ENCODE measurements at regions of chr2 and their contacts with region 1.

Region 1: DNA sequence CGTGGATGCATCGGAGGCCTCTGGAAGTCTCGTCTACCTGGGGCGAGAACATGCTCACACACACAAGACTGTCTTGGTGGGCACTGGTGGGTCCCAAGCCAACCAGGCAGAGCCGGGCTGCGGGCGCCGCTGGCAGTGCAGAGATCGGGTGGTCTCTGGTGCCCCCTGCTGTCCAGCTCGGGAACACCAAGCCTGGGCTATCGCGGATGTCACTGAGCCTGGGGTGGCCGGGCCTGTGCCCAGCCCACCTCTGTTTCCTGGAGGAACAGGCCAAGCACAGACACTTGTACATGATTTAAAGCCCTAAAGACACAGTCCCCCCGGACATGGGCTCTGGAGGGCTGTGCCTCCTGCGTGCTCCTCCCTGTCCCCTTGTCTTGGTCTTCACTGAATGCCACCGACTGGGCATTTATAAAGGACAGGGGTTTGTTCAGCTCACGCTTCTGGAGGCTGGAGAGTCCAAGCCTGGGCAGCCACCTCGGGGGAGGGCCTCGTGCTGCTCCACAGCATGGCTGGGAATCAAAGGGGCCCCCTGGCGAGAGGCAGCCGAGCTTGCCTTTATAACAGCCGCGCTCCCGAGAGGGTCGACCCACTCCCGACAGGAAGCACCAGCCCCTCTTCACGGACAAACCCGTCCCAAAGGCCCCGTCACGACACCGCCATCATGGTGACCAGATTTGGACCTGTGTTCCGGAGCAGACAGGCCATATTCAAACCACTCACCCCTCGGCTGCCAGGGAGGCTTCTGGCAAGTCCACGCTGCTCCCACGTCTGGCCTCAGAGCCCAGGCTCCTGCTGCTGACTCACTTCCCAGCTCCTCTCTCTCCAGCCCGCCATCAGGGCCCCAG is 3.6 kb upstream of the OTOS start:
- ATAC-seq: peak; percentile 77 to 98 (median 88)
- H3K4me3 ChIP-seq: no peak overlapping the region
- H3K27ac ChIP-seq: no peak overlapping the region
- H3K4me1 ChIP-seq: no peaks in the 10 kb centered on the region

Region 2: DNA sequence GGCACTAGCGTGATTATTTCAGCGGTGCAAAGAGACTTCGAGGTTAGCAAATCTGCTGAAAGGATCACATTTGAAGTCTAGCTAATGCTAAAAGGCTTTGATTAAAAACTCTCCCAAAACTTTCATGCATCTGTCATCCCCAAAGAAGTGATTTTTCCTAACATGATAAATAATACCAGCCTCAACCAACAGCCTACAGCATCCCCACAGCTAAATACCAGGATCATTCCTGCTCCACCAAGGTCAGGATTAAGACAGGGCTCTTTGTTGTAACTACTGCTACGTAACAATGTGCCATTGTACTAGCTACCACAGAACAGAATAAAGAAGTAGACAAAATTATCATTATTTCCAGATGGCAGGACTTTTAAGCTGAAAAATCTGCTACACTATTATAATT is 92.3 kb before region 1 on chr2:
- in situ Hi-C with region 1: loop called in 1 of 9 experiments (anchors 10 kb)
- ATAC-seq: peak in 1 of 8 experiments; percentile 48
- H3K4me3 ChIP-seq: no peak overlapping the region
- H3K27ac ChIP-seq: no peak overlapping the region
- H3K4me1 ChIP-seq: no peaks in the 10 kb centered on the region

Region 3: DNA sequence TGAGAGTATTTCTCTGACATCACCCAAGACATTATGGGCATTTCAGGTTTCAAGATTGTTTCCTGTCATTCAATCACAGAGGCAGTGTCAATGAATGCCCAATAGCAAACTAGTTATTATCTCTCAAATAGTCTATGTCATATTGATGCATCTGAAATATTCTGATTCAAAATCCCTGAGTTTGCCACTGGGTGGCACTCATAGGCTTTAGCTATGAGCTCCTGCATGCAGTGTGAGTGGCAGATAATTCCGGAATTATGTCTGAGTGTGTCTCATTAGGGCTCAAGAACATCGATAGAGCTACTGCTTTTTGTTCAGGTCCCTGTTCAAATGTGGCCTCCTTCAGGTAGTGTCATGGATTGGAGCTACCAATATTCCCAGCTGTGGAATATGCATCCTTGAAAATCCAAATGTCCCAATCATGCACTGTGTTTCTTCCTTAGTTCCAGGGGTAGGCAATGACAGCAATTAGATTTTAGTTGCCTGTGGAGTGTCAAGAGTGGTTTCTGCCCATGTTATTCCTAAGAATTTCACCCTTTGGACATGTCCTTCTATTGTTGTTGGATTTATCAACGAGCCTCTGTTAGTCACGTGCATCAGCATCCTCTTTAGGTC is 82.9 kb before region 1 on chr2:
- in situ Hi-C with region 1: loop called in 3 of 9 experiments (anchors 5 to 10 kb)
- ATAC-seq: peak; percentile 53 to 97 (median 82)
- H3K4me3 ChIP-seq: no peak overlapping the region
- H3K27ac ChIP-seq: no peak overlapping the region
- H3K4me1 ChIP-seq: no peaks in the 10 kb centered on the region

Region 4: DNA sequence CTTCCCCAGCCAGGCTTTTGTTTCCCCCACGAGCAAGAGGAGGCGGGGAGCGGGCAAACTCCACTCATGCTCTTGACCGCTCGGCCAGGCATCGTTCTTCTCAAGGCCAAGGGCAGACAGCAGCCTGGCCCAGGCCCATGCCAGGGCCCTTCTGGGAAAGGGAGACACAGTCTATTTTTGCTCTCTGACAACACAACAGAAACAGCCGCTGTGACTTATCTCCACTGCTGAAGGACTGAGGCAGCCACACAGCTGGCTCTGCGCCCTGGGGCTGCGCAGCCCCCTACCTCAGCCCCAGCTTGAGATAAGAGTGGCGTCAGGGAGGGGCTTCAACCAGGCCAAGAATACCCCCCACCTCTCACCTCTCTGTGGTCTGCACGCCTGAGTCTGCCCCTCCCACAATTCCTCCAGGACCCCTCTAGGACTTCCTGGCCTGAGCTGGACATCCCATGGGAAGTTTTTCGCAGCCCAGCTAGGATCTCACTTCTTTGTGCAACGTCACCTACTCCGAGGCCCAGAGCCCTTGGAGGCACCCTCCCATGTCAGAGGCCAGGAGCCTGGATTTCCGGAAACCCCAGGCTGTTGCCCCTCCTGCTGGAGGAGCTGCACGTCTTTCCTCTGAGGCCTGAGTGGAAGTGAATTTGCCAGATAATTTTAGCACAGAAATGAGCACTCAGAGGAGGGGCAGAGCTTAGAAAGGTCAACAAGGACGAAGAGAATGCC is 115.3 kb after region 1 on chr2:
- in situ Hi-C with region 1: no loop called
- ATAC-seq: peak in 3 of 8 experiments; percentile 8 to 25 (median 15)
- H3K4me3 ChIP-seq: no peak overlapping the region
- H3K27ac ChIP-seq: no peak overlapping the region
- H3K4me1 ChIP-seq: peaks cover 0 to 11% of the 10 kb centered on the region in 2 donors